Heart left ventricle (tissue), 16 donors: ENCODE measurements at regions of chr12 and their contacts with region 1.

Region 1: GRCh38 chr12:101830367-101831325 is at the start of gene GNPTAB:
- DNase-seq: peak; percentile 92 to 97 (median 94)
- ATAC-seq: peak; percentile 96 to 98 (median 98)
- H3K4me3 ChIP-seq: peak within 1 kb of the TSS; percentile 67 to 99 (median 81)
- H3K27ac ChIP-seq: peak within 1 kb of the TSS in 11 of 12 donors; percentile 74 to 90 (median 84)
- H3K4me1 ChIP-seq: peaks cover 0 to 45% (median 22%) of the 10 kb centered on the region in 12 donors
- H3K27me3 ChIP-seq: no peaks in the 10 kb centered on the region
- CTCF ChIP-seq: peak; percentile 60 to 95 (median 78)
- POLR2A ChIP-seq: no peak
- total RNA-seq, gene GNPTAB: 23.5 to 61.2 (median 45.9) TPM

Region 2: DNA sequence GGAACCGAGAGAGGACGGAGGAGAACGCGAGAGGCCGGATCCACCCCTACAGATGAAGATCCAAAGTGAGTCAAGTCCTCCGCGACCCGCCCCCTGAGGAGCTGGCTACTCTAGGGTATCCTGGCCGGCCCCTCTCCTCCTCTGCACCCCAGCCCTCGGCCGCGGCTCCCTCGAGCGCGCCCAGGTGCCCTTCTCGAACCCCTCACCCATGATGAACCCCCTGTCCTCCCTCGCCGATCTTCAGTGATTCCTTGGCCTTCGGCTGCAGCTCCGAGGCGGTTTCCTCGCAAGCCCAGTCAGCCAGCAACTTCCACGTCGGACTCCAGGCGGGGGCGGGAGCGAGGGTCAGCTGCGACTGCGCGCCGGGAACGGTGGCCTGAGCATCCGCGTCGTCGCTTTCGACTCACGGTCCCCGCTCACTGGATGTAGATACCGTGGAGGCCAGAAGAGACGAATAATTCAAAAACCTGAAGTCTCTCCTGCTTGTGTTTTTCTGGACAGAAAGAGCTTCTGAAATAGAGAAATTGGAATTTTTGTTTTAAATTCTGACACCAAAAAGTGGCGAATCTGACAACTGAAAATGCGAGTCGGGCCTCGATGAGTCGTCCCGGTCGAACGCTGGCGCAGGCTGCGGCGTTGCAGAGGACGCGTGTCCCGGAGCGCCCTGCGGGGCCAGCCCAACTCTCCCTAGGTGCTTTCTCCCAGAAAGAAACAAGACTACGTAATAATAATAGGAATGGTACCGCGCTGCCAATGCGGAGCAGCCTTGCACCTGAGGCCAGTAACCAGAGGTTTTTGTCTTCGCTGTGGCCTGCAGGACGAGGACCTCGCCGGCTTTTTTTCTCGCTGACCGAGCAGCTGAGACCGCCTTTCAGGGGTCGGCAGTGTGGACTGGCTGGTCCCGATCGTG is 423.0 kb before region 1 on chr12 and contains the start of gene ARL1:
- intact Hi-C with region 1: loop called in 6 of 10 experiments (anchors 5 to 10 kb)
- DNase-seq: peak; percentile 86 to 93 (median 90)
- ATAC-seq: peak; percentile 92 to 97 (median 96)
- H3K4me3 ChIP-seq: peak within 1 kb of the TSS; percentile 47 to 92 (median 78)
- H3K27ac ChIP-seq: peak within 1 kb of the TSS; percentile 79 to 97 (median 92)
- H3K4me1 ChIP-seq: peaks cover 5 to 28% (median 18%) of the 10 kb centered on the region in 12 donors
- H3K27me3 ChIP-seq: no peaks in the 10 kb centered on the region
- CTCF ChIP-seq: no peak
- POLR2A ChIP-seq: peak in 1 of 2 donors; percentile 22
- total RNA-seq, gene ARL1: 69.1 to 115 (median 93.7) TPM

Region 3: GRCh38 chr12:101490286-101490920 is 340.2 kb before region 1 on chr12:
- intact Hi-C with region 1: loop called in 1 of 10 experiments (anchors 10 kb)
- DNase-seq: no peak
- ATAC-seq: peak; percentile 47 to 85 (median 80)
- H3K4me3 ChIP-seq: no peak overlapping the region
- H3K27ac ChIP-seq: peak overlapping the region in 1 of 12 donors; percentile 13
- H3K4me1 ChIP-seq: peaks cover 0 to 14% (median 0%) of the 10 kb centered on the region in 12 donors
- H3K27me3 ChIP-seq: no peaks in the 10 kb centered on the region
- CTCF ChIP-seq: peak; percentile 11 to 55 (median 41)
- POLR2A ChIP-seq: no peak

Region 4: GRCh38 chr12:101773650-101774162 is 56.9 kb before region 1 on chr12:
- intact Hi-C with region 1: loop called in 9 of 10 experiments (anchors 2 to 5 kb)
- DNase-seq: peak in 4 of 5 donors; percentile 41 to 63 (median 50)
- ATAC-seq: peak in 3 of 4 donors; percentile 69 to 77 (median 74)
- H3K4me3 ChIP-seq: no peak overlapping the region
- H3K27ac ChIP-seq: no peak overlapping the region
- H3K4me1 ChIP-seq: peaks cover 0 to 44% (median 1%) of the 10 kb centered on the region in 12 donors
- H3K27me3 ChIP-seq: no peaks in the 10 kb centered on the region
- CTCF ChIP-seq: peak in 11 of 12 donors; percentile 89 to 99 (median 95)
- POLR2A ChIP-seq: no peak

Region 5: DNA sequence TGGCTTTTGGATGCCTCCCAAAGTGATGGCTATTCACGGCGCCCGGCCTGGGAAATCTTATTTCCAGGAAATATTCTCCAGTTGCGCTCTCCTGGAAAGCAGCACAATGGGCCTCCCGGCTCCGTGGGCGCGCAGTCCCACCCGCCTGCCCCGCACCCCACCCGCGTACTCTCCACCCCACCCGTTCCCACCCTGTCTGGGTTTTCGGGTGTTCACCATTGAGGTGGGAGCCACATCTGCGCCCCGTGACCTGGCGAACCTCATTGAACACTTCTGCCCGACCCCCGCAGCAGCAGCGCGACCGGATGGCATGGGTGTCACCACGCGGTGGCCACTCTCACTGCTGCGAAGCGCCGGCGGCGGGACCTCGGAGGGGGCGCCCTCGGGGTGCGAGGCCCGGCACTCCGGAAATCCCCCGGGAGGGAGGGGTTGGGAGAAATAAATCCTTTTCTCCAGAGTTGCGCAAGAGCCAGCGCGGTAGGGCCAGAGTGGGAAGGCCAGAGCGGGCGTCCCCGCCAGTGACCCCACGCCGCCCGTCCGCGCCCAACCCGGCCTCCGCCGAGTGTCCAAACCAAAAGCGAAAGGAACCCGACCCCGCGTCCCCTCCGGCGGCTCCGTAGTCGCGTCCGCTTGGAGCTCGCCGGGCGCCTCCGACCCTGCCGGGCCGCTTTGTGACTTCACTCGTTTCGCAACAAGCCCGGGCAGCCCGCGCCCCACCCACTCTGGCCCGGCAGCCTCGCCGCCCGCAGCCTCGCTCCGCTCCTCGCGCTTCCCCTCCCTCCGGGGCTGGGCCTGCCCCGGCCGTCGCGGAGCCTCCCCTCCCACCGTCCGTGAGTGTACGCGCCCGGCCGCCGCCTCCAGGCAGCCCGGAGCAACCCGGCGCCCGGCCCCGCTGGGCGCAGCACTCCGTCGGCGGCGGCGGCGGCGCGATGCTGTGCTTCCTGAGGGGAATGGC is 46.5 kb after region 1 on chr12 and contains the start of gene DRAM1:
- intact Hi-C with region 1: loop called in 2 of 10 experiments (anchors 2 to 5 kb)
- DNase-seq: peak; percentile 89 to 96 (median 92)
- ATAC-seq: peak; percentile 82 to 97 (median 92)
- H3K4me3 ChIP-seq: peak within 1 kb of the TSS; percentile 60 to 95 (median 86)
- H3K27ac ChIP-seq: peak within 1 kb of the TSS; percentile 82 to 99 (median 96)
- H3K4me1 ChIP-seq: peaks cover 0 to 66% (median 11%) of the 10 kb centered on the region in 12 donors
- H3K27me3 ChIP-seq: no peaks in the 10 kb centered on the region
- CTCF ChIP-seq: peak in 4 of 12 donors; percentile 14 to 24 (median 18)
- POLR2A ChIP-seq: peak in 1 of 2 donors; percentile 80
- total RNA-seq, gene DRAM1: 3.7 to 40.7 (median 4.3) TPM

Region 6: DNA sequence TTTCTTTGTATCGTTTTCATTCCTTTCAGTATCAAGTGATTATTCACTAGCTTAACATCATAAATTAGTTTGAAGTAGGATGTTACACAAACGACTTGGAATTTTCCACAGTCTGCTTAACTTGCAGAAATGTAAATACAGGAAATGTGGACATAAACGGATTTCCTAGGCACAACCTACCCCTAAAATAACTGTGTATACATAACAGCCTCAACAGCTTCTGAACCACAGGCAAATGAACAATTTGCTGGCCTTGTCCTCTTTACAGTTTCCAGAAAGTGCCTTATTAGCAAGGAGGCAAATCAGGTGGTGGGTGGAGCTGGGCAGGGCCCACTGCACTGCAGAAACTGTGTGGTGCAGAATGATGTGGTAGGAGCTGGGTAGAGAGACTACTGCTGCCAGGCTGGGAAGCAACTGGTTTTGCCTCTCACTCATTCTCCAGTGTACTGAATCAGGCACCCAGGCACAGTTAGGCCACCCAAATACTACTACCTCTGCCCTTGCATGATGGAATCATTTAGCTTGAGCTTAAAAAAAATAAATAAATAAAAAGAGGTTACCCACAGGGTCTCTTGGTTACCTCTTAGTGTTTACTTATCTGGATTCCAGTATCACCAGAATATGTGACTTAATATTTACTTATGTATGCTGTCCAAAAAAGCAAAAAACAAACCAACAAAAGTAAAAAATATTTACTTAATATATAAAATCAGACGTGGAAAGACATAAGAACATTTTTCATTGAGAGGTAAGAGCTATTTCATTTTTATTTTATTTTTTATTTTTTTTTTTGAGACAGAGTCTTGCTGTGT is 61.0 kb after region 1 on chr12:
- intact Hi-C with region 1: no loop called
- DNase-seq: no peak
- ATAC-seq: peak in 3 of 4 donors; percentile 28 to 71 (median 52)
- H3K4me3 ChIP-seq: no peak overlapping the region
- H3K27ac ChIP-seq: peak overlapping the region in 2 of 12 donors; percentile 52 to 85
- H3K4me1 ChIP-seq: peaks cover 0 to 59% (median 1%) of the 10 kb centered on the region in 12 donors
- H3K27me3 ChIP-seq: no peaks in the 10 kb centered on the region
- CTCF ChIP-seq: no peak
- POLR2A ChIP-seq: no peak

Region 7: DNA sequence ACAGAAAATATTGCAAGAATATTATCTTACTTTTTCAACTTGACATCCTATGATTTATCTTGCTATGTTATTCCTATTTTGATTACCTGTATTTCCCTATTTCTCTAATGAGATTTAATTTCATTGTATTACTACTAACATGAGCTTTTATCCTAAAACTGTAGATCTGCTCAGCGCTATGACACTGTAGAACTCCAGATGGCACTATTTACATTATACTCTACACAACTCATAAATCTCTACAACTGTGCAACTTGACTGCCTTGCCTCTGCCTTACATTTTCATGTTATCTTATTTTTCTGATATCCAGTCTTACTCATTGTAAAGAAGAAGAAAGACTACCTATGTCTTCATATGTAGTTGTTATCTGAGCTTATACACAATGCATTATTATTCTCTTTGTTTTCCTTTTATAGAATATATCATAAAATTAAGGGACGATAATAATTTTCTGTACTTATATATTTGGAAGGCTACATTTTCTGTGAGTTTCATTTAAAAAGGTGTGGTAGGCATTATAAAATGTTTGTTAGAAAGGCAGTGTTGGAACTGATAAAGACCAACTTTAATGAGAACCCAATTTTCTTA is 265.1 kb after region 1 on chr12:
- intact Hi-C with region 1: no loop called
- DNase-seq: no peak
- ATAC-seq: no peak
- H3K4me3 ChIP-seq: no peak overlapping the region
- H3K27ac ChIP-seq: no peak overlapping the region
- H3K4me1 ChIP-seq: peaks cover 0 to 13% (median 0%) of the 10 kb centered on the region in 12 donors
- H3K27me3 ChIP-seq: no peaks in the 10 kb centered on the region
- CTCF ChIP-seq: peak in 7 of 12 donors; percentile 14 to 42 (median 26)
- POLR2A ChIP-seq: no peak